T-cell (primary cell): ENCODE measurements at regions of chr19 and their contacts with region 1.

Region 1: GRCh38 chr19:6204826-6205735 is 69.6 kb downstream of the ACSBG2 start:
- DNase-seq: no peak
- ATAC-seq: no peak
- H3K4me3 ChIP-seq: no peak overlapping the region
- H3K4me3 Mint-ChIP-seq: no peak overlapping the region
- H3K27ac ChIP-seq: no peak overlapping the region
- H3K27ac Mint-ChIP-seq: no peak overlapping the region
- H3K4me1 ChIP-seq: peaks cover 0 to 1% of the 10 kb centered on the region in 2 experiments
- H3K4me1 Mint-ChIP-seq: no peaks in the 10 kb centered on the region
- H3K27me3 ChIP-seq: peaks cover 0 to 12% of the 10 kb centered on the region in 2 experiments
- H3K27me3 Mint-ChIP-seq: peaks cover 0 to 2% of the 10 kb centered on the region in 2 donors

Region 2: DNA sequence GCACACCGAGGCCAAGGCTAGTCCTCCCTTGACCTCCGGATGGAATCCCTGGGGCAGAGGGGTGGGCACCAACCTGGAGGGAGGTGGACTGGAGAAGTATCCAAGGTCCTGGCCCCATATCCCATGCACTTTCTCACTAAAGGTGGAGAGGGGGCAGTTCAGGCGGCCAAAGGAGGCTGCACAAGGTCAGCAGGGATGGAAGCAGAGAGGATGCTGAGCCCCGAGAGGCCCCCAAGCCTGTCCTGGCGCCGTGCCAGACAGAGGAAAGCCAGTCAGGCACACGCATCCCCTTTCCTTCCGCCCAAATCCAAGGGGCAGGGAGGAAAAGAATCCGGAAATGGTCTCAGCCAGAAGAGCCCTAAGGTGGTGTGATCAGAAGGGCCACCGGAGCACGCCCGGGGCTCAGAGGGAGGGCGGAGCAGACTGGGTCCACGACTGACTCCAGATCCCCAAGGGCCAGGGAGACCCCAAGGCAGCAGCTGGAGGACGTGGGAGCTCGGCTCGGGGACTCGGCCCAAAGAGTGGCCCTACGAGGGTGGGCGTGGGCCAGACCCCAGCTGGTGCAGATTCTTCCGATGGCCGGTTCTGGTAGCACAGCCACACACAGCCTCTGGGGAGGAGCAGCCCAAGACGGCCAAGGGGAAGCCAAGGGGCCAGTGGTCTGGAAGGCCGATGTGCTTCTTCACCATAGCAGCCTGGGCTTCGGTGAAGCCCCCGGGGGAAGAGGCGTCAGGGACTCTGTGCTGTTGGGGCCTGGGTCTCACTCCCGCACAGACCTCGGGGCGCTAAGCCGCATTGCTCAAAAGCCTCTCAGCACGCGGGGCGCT is 14.7 kb after region 1 on chr19:
- CTCF ChIA-PET with region 1: no interaction called
- POLR2A ChIA-PET with region 1: no interaction called
- DNase-seq: no peak
- ATAC-seq: no peak
- H3K4me3 ChIP-seq: no peak overlapping the region
- H3K4me3 Mint-ChIP-seq: no peak overlapping the region
- H3K27ac ChIP-seq: no peak overlapping the region
- H3K27ac Mint-ChIP-seq: no peak overlapping the region
- H3K4me1 ChIP-seq: peaks cover 0 to 7% of the 10 kb centered on the region in 2 experiments
- H3K4me1 Mint-ChIP-seq: peaks cover 0 to 2% (median 0%) of the 10 kb centered on the region in 3 donors
- H3K27me3 ChIP-seq: no peaks in the 10 kb centered on the region
- H3K27me3 Mint-ChIP-seq: no peaks in the 10 kb centered on the region

Region 3: DNA sequence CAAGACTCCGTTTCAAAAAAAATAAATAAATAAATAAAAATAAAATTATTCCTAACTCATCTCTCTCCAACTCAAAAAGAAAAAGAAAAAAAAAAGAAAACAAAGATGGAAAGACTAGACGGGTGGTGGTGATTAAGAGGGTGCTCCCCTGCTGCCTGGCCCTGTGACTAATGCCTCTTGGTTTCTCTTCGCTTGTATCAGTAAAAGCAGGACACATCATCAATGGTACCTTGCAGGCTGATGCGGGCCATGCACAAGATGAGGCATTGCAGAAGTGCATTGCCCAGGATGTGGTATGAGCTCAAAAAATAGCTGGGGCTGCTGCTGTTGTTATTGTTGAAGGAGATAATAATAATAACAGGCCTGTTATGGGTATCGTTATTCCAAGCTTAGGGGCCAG is 113.7 kb after region 1 on chr19:
- CTCF ChIA-PET with region 1: no interaction called
- POLR2A ChIA-PET with region 1: interaction called in 1 of 2 experiments, 12 read pairs
- DNase-seq: no peak
- ATAC-seq: no peak
- H3K4me3 ChIP-seq: no peak overlapping the region
- H3K4me3 Mint-ChIP-seq: no peak overlapping the region
- H3K27ac ChIP-seq: no peak overlapping the region
- H3K27ac Mint-ChIP-seq: no peak overlapping the region
- H3K4me1 ChIP-seq: no peaks in the 10 kb centered on the region
- H3K4me1 Mint-ChIP-seq: no peaks in the 10 kb centered on the region
- H3K27me3 ChIP-seq: no peaks in the 10 kb centered on the region
- H3K27me3 Mint-ChIP-seq: no peaks in the 10 kb centered on the region

Region 4: DNA sequence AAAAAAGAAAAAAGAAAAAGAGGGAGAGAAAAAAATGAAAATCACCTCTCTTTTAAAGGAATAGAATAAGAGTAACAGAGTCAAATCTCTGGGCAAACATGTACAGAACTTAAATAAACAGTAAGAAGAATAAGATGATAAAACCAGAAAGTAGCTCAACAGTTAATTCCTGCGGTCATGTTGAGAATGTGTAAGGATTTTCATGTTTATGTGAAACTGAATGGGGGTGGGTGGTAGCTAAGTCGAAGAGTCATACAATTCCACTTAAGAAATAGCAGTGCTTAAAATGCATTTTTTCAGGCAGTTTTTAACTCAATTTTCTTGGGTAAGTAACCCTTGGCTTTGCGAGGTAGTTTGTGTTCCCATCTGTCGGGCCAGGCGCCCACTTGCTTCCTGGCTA is 1222.9 kb after region 1 on chr19:
- CTCF ChIA-PET with region 1: no interaction called
- POLR2A ChIA-PET with region 1: no interaction called
- DNase-seq: no peak
- ATAC-seq: no peak
- H3K4me3 ChIP-seq: no peak overlapping the region
- H3K4me3 Mint-ChIP-seq: peak overlapping the region in 2 of 3 donors; percentile 4 to 42
- H3K27ac ChIP-seq: no peak overlapping the region
- H3K27ac Mint-ChIP-seq: peak overlapping the region; percentile 67 to 73
- H3K4me1 ChIP-seq: peaks cover 0 to 35% of the 10 kb centered on the region in 2 experiments
- H3K4me1 Mint-ChIP-seq: peaks cover 4 to 28% (median 27%) of the 10 kb centered on the region in 3 donors
- H3K27me3 ChIP-seq: no peaks in the 10 kb centered on the region
- H3K27me3 Mint-ChIP-seq: no peaks in the 10 kb centered on the region

Region 5: GRCh38 chr19:7861955-7862951 is 1657.2 kb after region 1 on chr19:
- CTCF ChIA-PET with region 1: no interaction called
- POLR2A ChIA-PET with region 1: no interaction called
- DNase-seq: peak; percentile 42 to 80 (median 66)
- ATAC-seq: peak; percentile 60 to 73 (median 69)
- H3K4me3 ChIP-seq: peak overlapping the region; percentile 35 to 61
- H3K4me3 Mint-ChIP-seq: peak overlapping the region; percentile 49 to 64 (median 63)
- H3K27ac ChIP-seq: no peak overlapping the region
- H3K27ac Mint-ChIP-seq: no peak overlapping the region
- H3K4me1 ChIP-seq: peaks cover 4 to 39% of the 10 kb centered on the region in 2 experiments
- H3K4me1 Mint-ChIP-seq: peaks cover 11 to 29% (median 16%) of the 10 kb centered on the region in 3 donors
- H3K27me3 ChIP-seq: peaks cover 0 to 89% of the 10 kb centered on the region in 2 experiments
- H3K27me3 Mint-ChIP-seq: peaks cover 5 to 21% of the 10 kb centered on the region in 2 donors